Left ventricle myocardium superior (tissue), 1 donor: ENCODE measurements at regions of chr1 and their contacts with region 1.

Region 1: GRCh38 chr1:115829023-115829693 is 11.8 kb downstream of the NHLH2 start:
- DNase-seq: no peak
- ATAC-seq: peak; percentile 81

Region 2: GRCh38 chr1:115624859-115625258 is 204.3 kb before region 1 on chr1:
- intact Hi-C with region 1: no loop called
- DNase-seq: no peak
- ATAC-seq: peak; percentile 70

Region 3: DNA sequence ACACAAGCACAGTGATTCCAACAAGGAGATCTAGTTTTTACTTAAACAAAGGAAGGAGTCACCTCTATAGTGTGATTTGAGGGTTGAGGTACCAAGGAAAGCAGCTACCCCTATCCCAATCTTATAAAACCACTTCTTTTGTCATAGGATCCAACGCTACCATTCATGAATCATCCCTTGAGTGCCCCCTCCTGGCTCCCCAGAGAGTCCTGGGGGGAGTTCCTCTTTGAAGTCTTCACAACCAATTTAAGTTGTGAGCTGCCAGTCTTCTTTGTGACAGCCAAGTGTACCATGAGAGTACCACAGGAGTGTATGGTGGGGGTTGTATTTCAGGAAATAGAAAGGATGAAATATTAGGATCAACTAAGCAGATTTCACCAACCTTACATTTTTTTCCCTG is 50.8 kb after region 1 on chr1:
- intact Hi-C with region 1: loop called (anchors 10 kb)
- DNase-seq: no peak
- ATAC-seq: no peak